Activated naive CD8-positive, alpha-beta T cell treated with anti-CD3 and anti-CD28 coated beads, Interleukin-2, amount 10 ng/mL, durations not matched to agents 7 days and 5 days (primary cell): ENCODE measurements at regions of chr17 and their contacts with region 1.

Region 1: DNA sequence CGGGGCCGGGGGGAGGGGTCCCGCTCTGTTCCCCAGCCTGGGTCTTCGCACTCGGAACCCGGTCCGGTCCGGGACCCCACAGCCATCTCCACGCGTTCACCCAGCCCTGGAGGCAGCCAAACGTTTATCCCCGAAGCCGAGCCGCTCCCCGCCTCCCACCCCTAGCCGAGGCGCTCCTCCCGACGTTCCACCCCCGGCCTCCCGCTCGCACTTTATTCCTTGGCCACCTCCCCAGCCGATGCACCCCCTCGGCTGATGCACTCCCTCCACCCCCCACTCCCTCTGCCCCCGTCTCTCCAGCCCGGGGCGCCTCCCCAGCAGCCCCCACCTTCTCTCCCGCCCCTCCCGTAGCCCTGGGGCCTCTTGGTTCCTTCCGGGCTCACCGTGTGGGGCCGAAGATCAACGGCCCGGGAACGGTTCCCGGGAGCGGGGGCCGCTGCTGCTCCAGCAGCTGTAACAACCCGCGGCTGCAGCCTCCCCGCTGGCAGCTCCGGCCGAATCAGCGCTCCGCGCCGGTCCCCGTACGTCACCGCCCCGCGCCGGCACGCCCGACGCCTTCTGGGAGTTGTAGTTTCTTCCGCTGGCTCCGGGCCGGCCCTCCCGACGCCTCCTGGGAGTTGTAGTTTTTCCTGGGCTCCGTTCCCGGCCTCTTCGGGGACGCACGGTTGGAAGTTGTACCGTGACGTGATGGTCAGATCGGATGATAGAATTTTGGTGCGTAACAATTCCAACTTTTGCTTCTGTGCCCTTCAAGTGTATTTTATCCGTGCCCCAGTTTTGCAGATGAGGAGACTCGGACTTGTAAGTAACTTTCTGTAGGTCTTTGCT is at the starts of genes LRRC3C and ORMDL3:
- DNase-seq: peak; percentile 95
- ATAC-seq: peak; percentile 67
- H3K4me3 Mint-ChIP-seq: peak within 1 kb of the TSS; percentile 89
- H3K27ac Mint-ChIP-seq: peak within 1 kb of the TSS; percentile 89
- H3K4me1 Mint-ChIP-seq: peaks cover 37% of the 10 kb centered on the region
- H3K27me3 Mint-ChIP-seq: no peaks in the 10 kb centered on the region
- total RNA-seq, gene LRRC3C: not detected
- total RNA-seq, gene ORMDL3: 149 to 159 TPM

Region 2: GRCh38 chr17:39754161-39754951 is 173.0 kb before region 1 on chr17:
- POLR2A ChIA-PET with region 1: interaction called, 17 read pairs
- DNase-seq: peak; percentile 99
- ATAC-seq: peak; percentile 90
- H3K4me3 Mint-ChIP-seq: peak overlapping the region; percentile 88
- H3K27ac Mint-ChIP-seq: peak overlapping the region; percentile 93
- H3K4me1 Mint-ChIP-seq: peaks cover 47% of the 10 kb centered on the region
- H3K27me3 Mint-ChIP-seq: no peaks in the 10 kb centered on the region

Region 3: GRCh38 chr17:39808409-39808997 is 118.8 kb before region 1 on chr17:
- POLR2A ChIA-PET with region 1: no interaction called
- DNase-seq: no peak
- ATAC-seq: no peak
- H3K4me3 Mint-ChIP-seq: no peak overlapping the region
- H3K27ac Mint-ChIP-seq: no peak overlapping the region
- H3K4me1 Mint-ChIP-seq: peaks cover 33% of the 10 kb centered on the region
- H3K27me3 Mint-ChIP-seq: no peaks in the 10 kb centered on the region

Region 4: GRCh38 chr17:39939588-39940419 is 12.5 kb after region 1 on chr17:
- POLR2A ChIA-PET with region 1: interaction called, 20 read pairs
- DNase-seq: no peak
- ATAC-seq: peak; percentile 96
- H3K4me3 Mint-ChIP-seq: peak overlapping the region; percentile 35
- H3K27ac Mint-ChIP-seq: peak overlapping the region; percentile 52
- H3K4me1 Mint-ChIP-seq: peaks cover 16% of the 10 kb centered on the region
- H3K27me3 Mint-ChIP-seq: no peaks in the 10 kb centered on the region

Region 5: DNA sequence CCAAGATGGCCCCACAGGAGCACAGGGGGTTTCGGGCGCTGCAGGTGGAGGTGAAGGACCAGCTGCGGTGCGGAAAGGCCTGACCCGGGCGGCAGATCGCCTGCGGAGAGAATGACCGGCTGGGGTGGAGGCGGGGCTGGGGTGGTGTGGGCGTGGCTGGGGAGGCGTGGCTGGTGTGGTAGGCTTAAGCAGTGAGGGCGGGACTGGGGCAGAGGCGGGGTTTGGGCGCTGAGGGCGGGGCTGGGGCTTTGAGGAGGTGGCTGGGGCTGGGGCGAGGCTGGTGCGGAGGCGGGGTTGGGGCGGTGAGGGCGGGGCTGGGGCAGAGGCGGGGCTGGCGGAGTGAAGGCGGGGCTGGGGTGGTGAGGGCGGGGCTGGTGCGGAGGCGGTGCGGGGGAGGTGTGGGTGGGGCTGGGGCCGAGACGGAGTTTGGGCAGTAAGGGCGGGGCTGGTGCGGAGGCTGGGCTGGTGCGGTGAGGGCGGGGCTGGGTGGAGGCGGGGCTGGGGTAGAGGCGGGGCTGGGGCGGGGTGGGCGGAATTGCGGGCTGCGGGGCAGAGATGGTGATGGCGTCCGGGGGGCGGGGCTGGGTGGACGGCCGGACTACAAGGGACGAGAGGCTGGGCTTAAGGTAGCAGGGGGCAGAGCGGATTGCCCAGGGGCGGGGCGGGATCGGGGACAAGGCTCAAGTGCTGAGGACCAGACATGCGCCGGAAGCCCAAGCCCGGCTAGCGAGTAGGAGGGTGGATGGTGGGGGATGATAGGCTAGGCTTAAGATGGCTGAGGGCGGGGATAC is 25.6 kb after region 1 on chr17:
- POLR2A ChIA-PET with region 1: interaction called, 11 read pairs
- DNase-seq: peak; percentile 97
- ATAC-seq: peak; percentile 90
- H3K4me3 Mint-ChIP-seq: peak overlapping the region; percentile 87
- H3K27ac Mint-ChIP-seq: peak overlapping the region; percentile 86
- H3K4me1 Mint-ChIP-seq: peaks cover 12% of the 10 kb centered on the region
- H3K27me3 Mint-ChIP-seq: no peaks in the 10 kb centered on the region

Region 6: DNA sequence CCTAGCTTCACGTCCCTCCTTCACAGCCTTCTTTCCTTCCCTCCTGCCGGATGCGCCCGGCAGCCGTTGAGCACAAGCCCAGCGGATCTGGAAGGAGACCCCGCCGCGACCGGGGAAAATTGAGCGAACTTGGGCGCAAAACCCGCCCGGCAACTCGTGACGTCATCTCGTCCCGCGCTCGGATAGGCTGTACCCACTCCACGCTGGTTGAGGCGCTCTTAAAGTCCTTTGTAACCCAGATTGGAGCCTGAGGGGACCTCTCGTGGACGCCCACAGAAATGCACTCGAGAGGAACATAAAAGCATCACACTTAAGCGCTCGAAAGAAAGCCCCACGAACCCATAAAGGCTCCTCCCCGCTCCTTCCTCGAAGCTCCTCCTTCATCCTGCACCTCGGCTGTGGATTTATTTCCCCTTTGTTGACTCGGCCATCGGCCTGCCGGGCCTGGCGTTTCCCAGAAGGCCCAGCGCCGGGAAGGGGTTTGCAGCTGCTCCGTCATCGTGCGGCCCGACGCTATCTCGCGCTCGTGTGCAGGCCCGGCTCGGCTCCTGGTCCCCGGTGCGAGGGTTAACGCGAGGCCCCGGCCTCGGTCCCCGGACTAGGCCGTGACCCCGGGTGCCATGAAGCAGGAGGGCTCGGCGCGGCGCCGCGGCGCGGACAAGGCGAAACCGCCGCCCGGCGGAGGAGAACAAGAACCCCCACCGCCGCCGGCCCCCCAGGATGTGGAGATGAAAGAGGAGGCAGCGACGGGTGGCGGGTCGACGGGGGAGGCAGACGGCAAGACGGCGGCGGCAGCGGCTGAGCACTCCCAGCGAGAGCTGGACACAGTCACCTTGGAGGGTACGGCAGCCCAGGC is 53.3 kb after region 1 on chr17 and contains the start of gene PSMD3:
- POLR2A ChIA-PET with region 1: interaction called, 12 read pairs
- DNase-seq: peak; percentile 94
- ATAC-seq: peak; percentile 94
- H3K4me3 Mint-ChIP-seq: peak within 1 kb of the TSS; percentile 97
- H3K27ac Mint-ChIP-seq: peak within 1 kb of the TSS; percentile 94
- H3K4me1 Mint-ChIP-seq: peaks cover 27% of the 10 kb centered on the region
- H3K27me3 Mint-ChIP-seq: peaks cover 22% of the 10 kb centered on the region
- total RNA-seq, gene PSMD3: 82.5 to 87.9 TPM